ENCODE measurements at regions of chr7 and their contacts with region 1.

Region 1: GRCh38 chr7:4641667-4642467 is 40.2 kb upstream of the FOXK1 start:
- H3K4me3 ChIP-seq: peak overlapping the region; percentile 52
- H3K27ac ChIP-seq: peak overlapping the region; percentile 54
- H3K4me1 ChIP-seq: no peaks in the 10 kb centered on the region
- CTCF ChIP-seq: 0 out of 2 replicates have a peak, but pooled peaks have one; percentile 28

Region 2: DNA sequence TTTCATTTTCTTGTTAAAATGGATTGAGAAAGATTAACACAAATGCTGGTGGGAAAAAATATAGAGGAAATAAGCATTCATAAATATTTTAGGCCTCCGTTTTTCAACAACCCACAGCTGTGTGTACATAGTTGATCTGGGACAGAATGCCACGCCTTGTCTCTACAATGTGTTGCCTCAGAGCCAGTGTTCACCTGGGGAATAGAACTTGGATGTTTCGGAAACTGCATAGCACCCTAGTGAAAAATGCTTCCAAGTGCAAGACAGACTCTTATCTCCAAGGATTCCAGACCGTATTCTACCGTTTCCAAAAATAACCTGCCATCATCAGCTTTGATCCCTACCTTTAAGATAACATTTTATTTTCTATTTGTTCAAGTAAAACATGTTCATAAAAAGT is 1079.9 kb before region 1 on chr7:
- CTCF ChIA-PET with region 1: no interaction called
- POLR2A ChIA-PET with region 1: no interaction called
- H3K4me3 ChIP-seq: no peak overlapping the region
- H3K27ac ChIP-seq: no peak overlapping the region
- H3K4me1 ChIP-seq: peaks cover 7% of the 10 kb centered on the region
- CTCF ChIP-seq: no peak

Region 3: DNA sequence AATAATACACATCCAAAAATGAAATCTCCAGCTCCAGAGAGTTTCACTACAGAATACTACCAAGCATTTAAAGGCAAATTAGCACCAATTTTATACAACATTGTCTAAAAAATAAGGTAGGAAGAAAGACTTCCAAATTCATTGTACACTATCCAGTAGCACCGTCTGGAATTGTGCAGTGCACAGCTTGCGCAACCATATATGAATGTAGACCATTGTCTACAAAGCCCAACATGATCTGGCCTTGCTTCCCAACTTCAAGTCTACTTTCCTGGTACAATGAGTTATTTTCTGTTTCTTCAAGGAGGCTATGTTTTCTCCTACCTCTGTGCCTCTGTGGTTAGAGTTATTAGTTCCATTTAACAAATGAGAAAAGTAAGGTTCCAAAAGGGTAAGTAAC is 75.2 kb before region 1 on chr7:
- CTCF ChIA-PET with region 1: no interaction called
- POLR2A ChIA-PET with region 1: no interaction called
- H3K4me3 ChIP-seq: no peak overlapping the region
- H3K27ac ChIP-seq: no peak overlapping the region
- H3K4me1 ChIP-seq: no peaks in the 10 kb centered on the region
- CTCF ChIP-seq: no peak

Region 4: GRCh38 chr7:4681886-4682620 is 40.2 kb after region 1 on chr7 and contains the start of gene FOXK1:
- CTCF ChIA-PET with region 1: interaction called, 3 read pairs
- POLR2A ChIA-PET with region 1: interaction called, 20 read pairs
- H3K4me3 ChIP-seq: peak within 1 kb of the TSS; percentile 97
- H3K27ac ChIP-seq: peak within 1 kb of the TSS; percentile 91
- H3K4me1 ChIP-seq: no peaks in the 10 kb centered on the region
- CTCF ChIP-seq: no peak

Region 5: DNA sequence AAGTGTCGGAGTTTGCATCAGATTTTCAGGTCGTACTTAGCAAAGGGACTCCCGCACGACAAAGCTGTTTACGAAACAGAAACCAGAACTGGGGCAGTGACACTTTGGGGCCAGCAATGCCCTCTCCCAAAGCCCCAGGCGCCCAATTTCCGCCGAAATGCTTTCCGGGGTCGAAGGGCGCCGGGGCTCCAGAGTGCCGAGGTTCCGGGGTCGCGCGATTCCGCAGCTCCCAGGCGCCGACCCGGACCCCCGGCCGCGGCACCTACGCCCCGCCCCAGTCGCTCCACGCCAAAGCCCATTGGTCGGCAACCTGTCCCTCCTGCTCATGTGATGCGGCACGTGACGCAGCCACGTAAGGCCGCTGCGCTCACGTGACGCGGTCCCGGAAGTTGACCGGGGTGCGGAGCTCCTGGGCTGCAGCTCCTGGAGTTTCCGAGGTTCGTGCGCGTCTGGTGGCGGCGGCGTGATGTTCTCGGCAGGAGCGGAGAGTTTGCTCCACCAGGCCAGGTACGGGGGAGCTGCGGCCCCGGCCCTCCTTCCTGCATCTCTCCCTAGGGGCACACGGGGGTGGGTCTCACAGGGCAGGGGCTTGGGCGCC is 133.5 kb after region 1 on chr7 and contains the start of gene AP5Z1:
- CTCF ChIA-PET with region 1: no interaction called
- POLR2A ChIA-PET with region 1: interaction called, 15 read pairs
- H3K4me3 ChIP-seq: peak within 1 kb of the TSS; percentile 73
- H3K27ac ChIP-seq: peak within 1 kb of the TSS; percentile 61; the same call in 1 of the 2 replicates
- H3K4me1 ChIP-seq: peaks cover 4% of the 10 kb centered on the region
- CTCF ChIP-seq: no peak

Measured in HEK293 (cell line).